IMR-90 (cell line): ENCODE measurements at regions of chr9 and their contacts with region 1.

Region 1: DNA sequence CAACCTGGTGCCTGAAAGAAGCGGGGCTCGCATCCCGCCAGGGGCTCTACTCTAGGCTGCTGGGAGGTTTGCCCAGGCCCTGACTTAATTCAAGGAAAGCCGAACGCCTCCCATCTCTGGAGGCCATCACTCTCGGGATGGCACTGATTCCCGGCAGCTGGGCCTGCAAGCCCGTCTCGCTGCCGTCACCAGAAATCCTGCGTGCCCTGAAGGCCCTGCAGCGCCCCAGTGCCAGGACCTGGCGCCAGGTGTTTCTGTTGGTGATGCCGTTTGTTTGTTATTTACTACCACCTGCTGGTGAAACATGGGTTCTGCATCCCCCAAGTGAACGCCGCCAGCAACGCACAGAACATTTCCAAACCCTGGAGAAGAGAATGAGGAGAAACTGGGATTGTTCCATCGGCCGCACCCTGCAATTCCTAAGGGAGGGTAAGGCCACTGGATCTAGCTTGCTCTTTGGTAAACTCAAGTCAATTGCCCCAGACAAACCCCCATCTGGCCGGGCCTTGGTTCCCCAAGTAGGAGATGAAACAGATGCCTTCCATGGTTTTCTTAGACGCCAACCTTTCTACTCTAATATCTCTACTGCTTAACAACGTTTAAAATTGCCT is 77.9 kb downstream of the AK8 start:
- DNase-seq: peak; percentile 63
- ATAC-seq: peak; percentile 93
- H3K4me3 ChIP-seq: no peak overlapping the region
- H3K27ac ChIP-seq: no peak overlapping the region
- H3K4me1 ChIP-seq: no peaks in the 10 kb centered on the region
- H3K27me3 ChIP-seq: peaks cover 51% of the 10 kb centered on the region
- CTCF ChIP-seq: peak; percentile 87
- POLR2A ChIP-seq: no peak
- RAD21 ChIP-seq: peak; percentile 90

Region 2: DNA sequence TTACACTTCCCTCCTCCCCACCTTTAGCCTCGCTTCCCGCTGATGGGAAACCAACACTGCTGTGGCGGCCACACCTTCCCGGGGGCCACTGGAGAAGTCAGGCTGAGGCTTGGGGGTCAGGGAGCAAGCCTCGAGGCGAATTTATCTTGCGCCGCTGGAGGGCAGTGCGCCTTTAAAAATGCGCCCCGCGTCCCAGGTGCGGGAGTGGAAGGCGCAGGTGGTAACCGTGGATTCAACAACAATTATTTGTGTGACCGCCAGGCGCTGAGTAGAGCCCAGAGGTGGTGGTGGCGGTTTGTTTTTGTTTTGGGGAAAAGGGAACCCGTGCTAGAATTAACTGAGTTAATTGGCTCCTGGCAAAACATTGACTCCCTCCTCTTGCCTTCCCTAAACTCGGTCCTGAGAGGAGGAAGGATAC is 389.0 kb before region 1 on chr9:
- CTCF ChIA-PET with region 1: no interaction called
- POLR2A ChIA-PET with region 1: no interaction called
- dilution Hi-C with region 1: no loop called
- in situ Hi-C with region 1: no loop called
- intact Hi-C with region 1: loop called (anchors 1 kb)
- DNase-seq: peak; percentile 7
- ATAC-seq: peak; percentile 31; the same call in 1 of the 2 replicates
- H3K4me3 ChIP-seq: no peak overlapping the region
- H3K27ac ChIP-seq: no peak overlapping the region
- H3K4me1 ChIP-seq: no peaks in the 10 kb centered on the region
- H3K27me3 ChIP-seq: peaks cover 43% of the 10 kb centered on the region
- CTCF ChIP-seq: peak; percentile 53
- POLR2A ChIP-seq: no peak
- RAD21 ChIP-seq: peak; percentile 64

Region 3: DNA sequence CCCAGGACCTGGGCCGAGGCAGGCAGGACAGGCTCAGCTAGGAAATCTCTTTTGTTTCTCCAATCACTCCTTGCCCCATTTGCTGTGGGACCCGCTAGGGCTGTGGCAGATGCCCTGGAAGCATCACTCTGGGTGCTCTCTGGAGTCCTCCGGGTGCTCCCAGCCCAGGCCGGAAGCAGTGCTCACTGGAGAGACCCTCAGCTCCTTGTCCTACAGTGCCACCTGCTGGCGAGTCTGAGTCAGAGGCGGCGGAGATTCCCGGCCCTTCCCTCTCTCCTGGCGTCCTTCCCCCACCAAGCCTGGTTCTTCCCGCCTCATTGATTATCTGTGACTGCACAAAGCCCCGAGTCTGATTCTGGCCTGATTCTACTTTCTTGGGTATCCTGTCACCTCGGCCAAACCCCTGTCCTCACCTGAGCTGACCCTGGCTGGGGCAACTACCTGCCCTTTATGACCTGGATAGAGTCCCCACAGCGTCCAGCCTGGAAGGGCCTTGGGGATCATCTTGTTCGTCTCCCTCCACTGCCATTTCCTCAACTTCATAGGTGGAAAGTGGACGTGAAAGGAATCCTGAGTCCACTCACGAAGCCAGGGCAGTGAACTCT is 225.0 kb before region 1 on chr9:
- CTCF ChIA-PET with region 1: no interaction called
- POLR2A ChIA-PET with region 1: no interaction called
- dilution Hi-C with region 1: no loop called
- in situ Hi-C with region 1: no loop called
- intact Hi-C with region 1: loop called (anchors 2 kb)
- DNase-seq: peak; percentile 67
- ATAC-seq: peak; percentile 98
- H3K4me3 ChIP-seq: no peak overlapping the region
- H3K27ac ChIP-seq: no peak overlapping the region
- H3K4me1 ChIP-seq: no peaks in the 10 kb centered on the region
- H3K27me3 ChIP-seq: peaks cover 57% of the 10 kb centered on the region
- CTCF ChIP-seq: peak; percentile 86
- POLR2A ChIP-seq: 0 out of 2 replicates have a peak, but pooled peaks have one; percentile 28
- RAD21 ChIP-seq: peak; percentile 93

Region 4: GRCh38 chr9:132669698-132670456 is 130.3 kb before region 1 on chr9 and contains the start of gene DDX31:
- CTCF ChIA-PET with region 1: no interaction called
- POLR2A ChIA-PET with region 1: no interaction called
- dilution Hi-C with region 1: no loop called
- in situ Hi-C with region 1: no loop called
- intact Hi-C with region 1: loop called (anchors 2 kb)
- DNase-seq: peak; percentile 76
- ATAC-seq: peak; percentile 92
- H3K4me3 ChIP-seq: peak within 1 kb of the TSS; percentile 72
- H3K27ac ChIP-seq: peak within 1 kb of the TSS; percentile 95
- H3K4me1 ChIP-seq: peaks cover 2% of the 10 kb centered on the region; the same call in 1 of the 2 replicates
- H3K27me3 ChIP-seq: no peaks in the 10 kb centered on the region
- CTCF ChIP-seq: no peak
- POLR2A ChIP-seq: peak; percentile 89
- RAD21 ChIP-seq: no peak
- total RNA-seq, gene DDX31: 12.5 and 14.0 TPM in 2 replicates

Region 5: DNA sequence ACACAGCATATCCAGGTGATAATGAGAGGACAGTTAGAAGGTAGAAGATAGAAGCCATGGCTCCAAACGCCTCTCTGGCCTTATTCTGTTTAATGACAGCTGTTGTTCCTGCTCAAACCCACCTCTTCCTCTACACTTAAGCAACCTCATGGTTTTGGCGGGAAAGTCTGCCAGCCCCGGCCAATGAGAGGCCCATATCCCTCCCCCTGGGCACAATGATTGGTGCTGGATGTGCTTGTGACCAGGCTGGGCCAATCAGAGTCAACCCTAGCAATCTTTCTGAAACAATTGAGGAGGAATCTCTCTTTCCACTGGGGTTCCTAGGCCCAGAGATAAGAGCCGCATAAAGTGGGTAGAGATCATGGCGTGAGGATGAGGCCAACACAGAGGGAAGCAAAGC is 173.6 kb after region 1 on chr9:
- CTCF ChIA-PET with region 1: no interaction called
- POLR2A ChIA-PET with region 1: no interaction called
- dilution Hi-C with region 1: no loop called
- in situ Hi-C with region 1: no loop called
- intact Hi-C with region 1: loop called (anchors 1 kb)
- DNase-seq: peak; percentile 18
- ATAC-seq: no peak; the same call in 1 of the 2 replicates
- H3K4me3 ChIP-seq: no peak overlapping the region
- H3K27ac ChIP-seq: no peak overlapping the region
- H3K4me1 ChIP-seq: no peaks in the 10 kb centered on the region
- H3K27me3 ChIP-seq: peaks cover 51% of the 10 kb centered on the region
- CTCF ChIP-seq: no peak
- POLR2A ChIP-seq: no peak
- RAD21 ChIP-seq: no peak